ENCODE measurements at regions of chrX and their contacts with region 1.

Region 1: DNA sequence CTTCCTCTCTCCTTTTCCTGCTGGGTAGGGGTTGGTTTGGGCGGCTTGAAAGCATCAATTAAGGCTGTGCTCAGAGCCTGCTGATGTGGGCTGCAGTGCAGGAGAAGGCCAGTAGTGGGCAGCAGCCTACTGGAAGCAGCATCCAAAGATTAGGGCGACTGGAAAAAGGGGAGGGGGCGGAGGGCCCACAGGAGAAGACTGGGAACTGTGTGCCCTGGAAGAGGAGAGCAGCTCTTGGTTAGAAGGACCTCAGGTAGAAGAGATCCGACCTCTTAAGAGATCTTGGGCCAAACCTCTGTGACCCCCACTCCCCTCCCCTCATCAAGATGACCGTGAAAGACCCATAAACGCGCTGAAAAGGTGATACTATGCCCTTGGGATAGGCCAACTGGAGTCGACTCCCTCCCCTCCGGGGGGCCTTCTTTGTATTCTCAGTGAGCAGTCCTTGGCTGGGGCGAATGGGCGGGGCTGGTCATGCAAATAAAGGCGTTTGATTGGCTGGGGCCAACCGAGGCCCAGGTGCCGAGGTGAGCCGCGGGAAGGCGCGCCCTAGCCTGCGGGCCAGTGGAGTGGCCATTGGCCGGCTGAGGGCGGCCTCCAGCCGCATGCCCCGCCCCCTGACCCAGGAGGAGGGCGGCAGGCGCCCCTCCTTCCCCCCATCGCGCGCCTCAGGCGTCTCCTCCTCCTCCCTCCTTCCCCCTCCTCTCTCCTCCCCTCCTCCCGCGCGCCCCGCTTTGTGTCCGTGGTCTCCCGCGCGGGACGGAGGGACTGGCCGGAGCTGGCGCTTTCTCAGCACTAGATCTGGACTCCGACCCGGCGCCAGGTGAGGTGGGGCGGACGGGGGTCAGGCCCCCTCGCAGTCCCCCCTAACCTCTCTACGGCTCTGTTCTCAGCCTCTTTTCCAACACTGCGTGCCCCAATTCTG is 10.1 kb downstream of the DLG3 start:
- H3K4me3 ChIP-seq: peak overlapping the region; percentile 56
- H3K27ac ChIP-seq: peak overlapping the region; percentile 95
- H3K4me1 ChIP-seq: no peaks in the 10 kb centered on the region; the same call in 1 of the 2 replicates
- CTCF ChIP-seq: peak; percentile 88

Region 2: GRCh38 chrX:70554081-70554480 is 99.4 kb after region 1 on chrX:
- CTCF ChIA-PET with region 1: interaction called, 48 read pairs
- POLR2A ChIA-PET with region 1: no interaction called
- H3K4me3 ChIP-seq: no peak overlapping the region
- H3K27ac ChIP-seq: no peak overlapping the region
- H3K4me1 ChIP-seq: no peaks in the 10 kb centered on the region
- CTCF ChIP-seq: no peak

Region 3: GRCh38 chrX:70664726-70665125 is 210.0 kb after region 1 on chrX:
- CTCF ChIA-PET with region 1: interaction called, 15 read pairs
- POLR2A ChIA-PET with region 1: no interaction called
- H3K4me3 ChIP-seq: no peak overlapping the region
- H3K27ac ChIP-seq: no peak overlapping the region
- H3K4me1 ChIP-seq: no peaks in the 10 kb centered on the region
- CTCF ChIP-seq: no peak